ENCODE measurements at regions of chr18 and their contacts with region 1.

Region 1: DNA sequence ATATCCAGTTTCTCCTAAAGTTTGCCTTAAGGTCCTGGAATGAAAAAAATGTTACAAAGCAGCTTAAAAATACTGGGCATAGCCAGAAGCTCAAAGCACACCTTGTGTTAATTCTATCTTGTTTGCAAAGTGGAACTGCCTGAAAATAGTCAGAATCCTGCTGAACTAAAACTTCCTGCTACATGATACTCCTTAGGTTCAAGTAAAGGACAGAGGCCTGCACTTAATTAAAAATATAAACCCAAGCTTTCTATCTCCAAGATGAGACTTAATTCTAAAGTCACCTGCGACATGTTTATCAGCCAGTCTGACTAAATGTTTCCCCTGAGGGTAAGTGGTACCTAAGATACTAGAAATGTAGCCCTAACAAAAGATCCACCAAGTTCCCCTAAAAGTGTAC is 103.4 kb downstream of the CHST9 start:
- DNase-seq: no peak
- ATAC-seq: no peak
- H3K4me3 ChIP-seq: no peak overlapping the region
- H3K4me3 Mint-ChIP-seq: no peak overlapping the region
- H3K27ac ChIP-seq: no peak overlapping the region
- H3K27ac Mint-ChIP-seq: no peak overlapping the region
- H3K4me1 ChIP-seq: no peaks in the 10 kb centered on the region
- H3K4me1 Mint-ChIP-seq: no peaks in the 10 kb centered on the region
- H3K27me3 ChIP-seq: no peaks in the 10 kb centered on the region
- H3K27me3 Mint-ChIP-seq: no peaks in the 10 kb centered on the region
- CTCF ChIP-seq: no peak

Region 2: GRCh38 chr18:27022463-27022862 is 59.2 kb before region 1 on chr18:
- intact Hi-C with region 1: loop called (anchors 10 kb)
- DNase-seq: no peak
- ATAC-seq: no peak
- H3K4me3 ChIP-seq: no peak overlapping the region
- H3K4me3 Mint-ChIP-seq: no peak overlapping the region
- H3K27ac ChIP-seq: no peak overlapping the region
- H3K27ac Mint-ChIP-seq: no peak overlapping the region
- H3K4me1 ChIP-seq: no peaks in the 10 kb centered on the region
- H3K4me1 Mint-ChIP-seq: no peaks in the 10 kb centered on the region
- H3K27me3 ChIP-seq: no peaks in the 10 kb centered on the region
- H3K27me3 Mint-ChIP-seq: peaks cover 0 to under 1% of the 10 kb centered on the region in 2 donors
- CTCF ChIP-seq: no peak

Measured in natural killer cell (primary cell).